ENCODE measurements at regions of chr19 and their contacts with region 1.

Region 1: GRCh38 chr19:11203194-11204075 is 6.1 kb upstream of the KANK2 start:
- DNase-seq: no peak
- H3K4me3 ChIP-seq: no peak overlapping the region
- H3K27ac ChIP-seq: peak overlapping the region in 7 of 8 donors; percentile 29 to 74 (median 70)
- H3K4me1 ChIP-seq: peaks cover under 1 to 32% (median 11%) of the 10 kb centered on the region in 6 donors
- H3K27me3 ChIP-seq: no peaks in the 10 kb centered on the region
- CTCF ChIP-seq: peak; percentile 37 to 86 (median 77)
- POLR2A ChIP-seq: no peak

Region 2: DNA sequence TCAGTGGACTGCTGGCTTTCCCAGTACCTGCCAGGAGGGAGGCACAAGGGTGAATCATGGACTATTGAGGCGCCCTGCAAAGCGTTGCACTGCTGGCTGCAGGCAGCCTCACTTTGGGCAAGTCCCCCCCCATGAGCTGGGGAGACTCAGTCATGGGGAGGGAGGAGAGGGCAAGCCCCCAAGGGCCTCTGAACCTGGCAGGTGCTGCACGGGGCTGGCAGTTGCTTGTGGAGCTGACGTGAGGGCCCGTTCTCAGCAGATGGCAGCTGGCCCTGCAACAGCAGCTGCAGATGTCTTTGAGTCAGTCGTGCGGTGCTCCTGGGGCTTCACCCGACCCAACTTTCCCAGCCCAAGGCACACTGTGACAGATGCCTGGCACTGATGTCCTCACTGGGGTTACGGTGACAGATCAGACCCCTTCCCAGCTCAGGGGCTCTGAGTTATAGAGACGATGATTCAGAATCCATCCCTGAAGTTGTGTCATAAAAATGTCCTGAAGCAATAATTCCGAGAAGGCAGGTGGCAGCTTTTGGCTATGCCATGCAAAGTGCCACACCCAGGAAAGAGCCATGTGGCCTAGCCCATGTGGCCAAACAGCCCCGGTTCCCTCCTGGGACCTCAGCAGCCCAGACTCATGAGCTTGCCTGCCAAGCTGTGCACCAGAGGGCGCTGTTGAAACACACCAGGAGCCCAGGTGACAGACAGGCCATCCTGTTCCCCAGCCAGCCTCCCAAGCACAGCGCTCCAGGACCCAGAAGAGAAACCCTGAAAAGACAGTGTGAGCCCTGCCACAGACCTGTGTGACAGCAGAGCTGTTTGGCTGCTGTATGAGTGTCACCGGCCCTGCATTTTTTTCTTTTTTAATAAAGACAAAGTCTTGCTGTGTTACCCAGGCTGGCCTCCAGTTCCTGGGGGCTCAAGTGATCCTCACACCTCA is 167.7 kb before region 1 on chr19:
- intact Hi-C with region 1: loop called (anchors 5 kb)
- DNase-seq: peak; percentile 96
- H3K4me3 ChIP-seq: no peak overlapping the region
- H3K27ac ChIP-seq: peak overlapping the region in 4 of 8 donors; percentile 10 to 67 (median 22)
- H3K4me1 ChIP-seq: peaks cover 5 to 20% (median 11%) of the 10 kb centered on the region in 6 donors
- H3K27me3 ChIP-seq: no peaks in the 10 kb centered on the region
- CTCF ChIP-seq: peak; percentile 81 to 96 (median 92)
- POLR2A ChIP-seq: no peak

Region 3: DNA sequence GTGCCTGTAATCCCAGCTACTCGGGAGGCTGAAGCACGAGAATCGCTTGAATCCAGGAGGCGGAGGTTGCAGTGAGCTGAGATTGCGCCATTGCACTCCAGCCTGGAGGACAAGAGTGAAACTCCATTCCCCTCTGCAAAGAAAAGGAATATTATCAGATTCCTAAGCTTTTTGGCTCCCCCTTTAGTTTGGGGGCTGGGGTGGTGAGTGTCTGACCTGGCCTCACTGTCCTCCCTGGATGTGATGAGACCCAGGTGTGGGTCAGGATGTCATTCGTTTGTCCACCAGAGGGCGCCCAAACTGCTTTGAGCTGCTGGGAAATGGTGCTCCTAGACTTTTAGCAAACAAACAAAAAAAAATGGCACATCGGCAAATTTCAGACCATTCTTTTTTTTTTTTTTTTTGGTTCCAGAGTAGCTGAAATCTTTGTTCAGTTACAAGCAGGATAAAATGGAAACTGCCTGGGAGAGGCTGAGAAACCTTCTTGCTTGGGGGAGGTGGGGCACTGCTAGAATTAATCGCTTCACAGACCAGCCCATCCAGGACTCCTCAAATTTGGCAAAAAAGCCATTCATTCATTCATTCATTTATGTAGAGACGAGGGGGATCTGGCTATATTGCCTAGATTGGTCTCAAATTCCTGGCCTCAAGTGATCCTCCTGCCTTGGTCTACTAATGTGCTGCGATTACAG is 77.3 kb before region 1 on chr19:
- intact Hi-C with region 1: loop called (anchors 5 kb)
- DNase-seq: peak; percentile 93
- H3K4me3 ChIP-seq: no peak overlapping the region
- H3K27ac ChIP-seq: no peak overlapping the region
- H3K4me1 ChIP-seq: peaks cover 6 to 21% (median 16%) of the 10 kb centered on the region in 6 donors
- H3K27me3 ChIP-seq: no peaks in the 10 kb centered on the region
- CTCF ChIP-seq: peak; percentile 21 to 85 (median 76)
- POLR2A ChIP-seq: no peak

Region 4: DNA sequence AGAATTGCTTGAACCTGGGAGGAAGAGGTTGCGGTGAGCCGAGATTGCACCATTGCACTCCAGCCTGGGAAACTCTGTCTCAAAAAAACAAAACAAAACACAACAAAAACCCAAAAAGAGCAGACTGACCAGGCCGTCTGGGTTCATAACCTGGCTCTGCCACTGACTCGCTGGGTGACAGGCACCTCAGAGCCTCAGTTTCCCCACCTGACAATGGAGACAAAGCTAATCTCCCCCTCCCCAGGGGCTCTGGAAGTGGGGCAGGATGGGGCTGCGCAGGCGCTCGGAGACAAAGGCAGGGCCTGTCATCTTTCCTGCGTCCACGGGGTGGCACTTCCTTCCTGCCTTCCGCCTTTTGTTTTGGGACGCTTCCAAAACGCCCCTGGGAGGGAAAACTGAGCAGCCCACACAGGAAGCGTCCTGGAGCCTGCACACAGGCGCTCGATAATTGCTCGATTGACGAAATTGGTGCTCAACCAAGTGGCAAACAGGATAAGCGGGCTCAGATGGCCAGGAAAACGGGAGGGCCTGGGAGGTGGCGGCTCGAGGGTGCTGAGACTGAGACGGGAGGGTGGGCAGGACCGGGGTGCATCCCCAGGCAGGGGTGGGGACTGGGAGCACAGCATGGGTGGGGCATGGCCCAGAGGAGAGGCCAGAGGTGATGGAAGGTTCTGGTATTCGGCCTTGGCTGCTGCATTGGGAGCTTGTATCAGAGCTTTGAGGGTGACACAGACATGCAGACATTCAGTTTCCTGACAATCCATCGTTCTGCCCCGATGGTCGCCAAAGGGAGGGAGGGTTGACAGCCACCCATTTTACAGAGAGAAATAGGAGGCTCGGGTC is 65.7 kb before region 1 on chr19:
- intact Hi-C with region 1: loop called (anchors 5 kb)
- DNase-seq: peak; percentile 84
- H3K4me3 ChIP-seq: peak overlapping the region in 4 of 8 donors; percentile 24 to 60 (median 26)
- H3K27ac ChIP-seq: peak overlapping the region; percentile 45 to 95 (median 77)
- H3K4me1 ChIP-seq: peaks cover 20 to 63% (median 44%) of the 10 kb centered on the region in 6 donors
- H3K27me3 ChIP-seq: peaks cover 0 to 45% (median 0%) of the 10 kb centered on the region in 7 donors
- CTCF ChIP-seq: peak; percentile 41 to 83 (median 69)
- POLR2A ChIP-seq: no peak